Activated B cell treated with CpG ODN at 0.5 μM for 24 hours (primary cell): ENCODE measurements at regions of chr20 and their contacts with region 1.

Region 1: DNA sequence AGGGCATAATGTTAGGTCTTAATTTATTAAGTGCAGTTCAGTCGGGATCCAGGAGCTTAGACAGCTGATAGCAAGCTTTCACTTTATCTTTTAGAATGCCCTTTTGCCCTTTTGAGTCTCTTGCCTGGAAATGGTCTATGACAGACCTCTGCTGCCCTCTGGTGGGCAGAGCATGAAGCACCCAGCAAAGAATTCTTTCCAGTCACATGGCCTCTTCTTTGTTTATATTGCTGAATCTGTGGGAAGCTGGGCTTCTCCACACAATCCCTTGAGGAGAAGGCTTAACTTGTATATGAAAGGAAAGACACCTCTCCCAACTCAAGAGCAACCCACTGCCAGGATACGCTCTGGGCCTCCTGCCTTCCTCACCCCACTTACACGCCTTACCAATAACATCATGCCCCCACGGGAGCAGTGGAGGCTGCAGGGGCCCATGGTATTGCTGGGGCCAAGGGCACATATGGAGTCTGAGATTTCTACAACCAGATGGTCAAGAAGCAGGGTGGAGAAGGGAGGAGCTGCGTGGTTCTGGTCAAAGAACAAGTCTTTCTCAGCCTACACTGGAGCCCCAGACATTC is 20.4 kb downstream of the WFDC3 start:
- DNase-seq: peak; percentile 65
- ATAC-seq: peak; percentile 71
- H3K4me3 Mint-ChIP-seq: no peak overlapping the region
- H3K27ac Mint-ChIP-seq: no peak overlapping the region
- H3K4me1 Mint-ChIP-seq: peaks cover 5% of the 10 kb centered on the region
- H3K27me3 Mint-ChIP-seq: peaks cover 16% of the 10 kb centered on the region
- CTCF ChIP-seq: peak; percentile 20

Region 2: DNA sequence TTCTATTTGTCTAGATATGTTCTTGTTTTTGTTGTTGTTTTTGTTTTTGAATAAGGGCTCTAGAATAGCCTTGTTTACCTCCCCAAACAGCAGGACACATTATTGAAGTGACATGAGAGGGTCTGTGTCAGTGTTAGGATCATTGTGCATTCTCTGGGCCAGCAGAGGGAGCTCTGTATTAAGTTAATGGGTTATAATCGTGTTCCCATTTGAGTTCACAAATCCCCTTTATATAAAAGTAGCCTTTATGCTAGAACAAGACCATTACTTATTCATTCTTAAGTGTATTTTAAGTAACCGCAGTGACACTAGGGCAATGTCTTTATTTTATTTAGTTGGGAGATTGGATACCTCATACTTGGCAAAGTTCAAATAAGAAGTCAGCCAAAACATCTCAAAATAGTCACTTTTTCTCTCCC is 760.2 kb before region 1 on chr20:
- CTCF ChIA-PET with region 1: no interaction called
- POLR2A ChIA-PET with region 1: no interaction called
- intact Hi-C with region 1: loop called (anchors 1 kb)
- DNase-seq: no peak
- ATAC-seq: peak; percentile 57
- H3K4me3 Mint-ChIP-seq: no peak overlapping the region
- H3K27ac Mint-ChIP-seq: peak overlapping the region; percentile 33
- H3K4me1 Mint-ChIP-seq: peaks cover 19% of the 10 kb centered on the region
- H3K27me3 Mint-ChIP-seq: no peaks in the 10 kb centered on the region
- CTCF ChIP-seq: no peak

Region 3: GRCh38 chr20:45080867-45081624 is 690.2 kb before region 1 on chr20:
- CTCF ChIA-PET with region 1: no interaction called
- POLR2A ChIA-PET with region 1: no interaction called
- intact Hi-C with region 1: no loop called
- DNase-seq: no peak
- ATAC-seq: no peak
- H3K4me3 Mint-ChIP-seq: no peak overlapping the region
- H3K27ac Mint-ChIP-seq: peak overlapping the region; percentile 16
- H3K4me1 Mint-ChIP-seq: peaks cover 5% of the 10 kb centered on the region
- H3K27me3 Mint-ChIP-seq: no peaks in the 10 kb centered on the region
- CTCF ChIP-seq: no peak

Region 4: GRCh38 chr20:45293041-45294002 is 477.9 kb before region 1 on chr20:
- CTCF ChIA-PET with region 1: interaction called, 33 read pairs
- POLR2A ChIA-PET with region 1: no interaction called
- intact Hi-C with region 1: no loop called
- DNase-seq: peak; percentile 78
- ATAC-seq: peak; percentile 89
- H3K4me3 Mint-ChIP-seq: peak overlapping the region; percentile 80
- H3K27ac Mint-ChIP-seq: no peak overlapping the region
- H3K4me1 Mint-ChIP-seq: peaks cover 21% of the 10 kb centered on the region
- H3K27me3 Mint-ChIP-seq: peaks cover 27% of the 10 kb centered on the region
- CTCF ChIP-seq: peak; percentile 87

Region 5: GRCh38 chr20:45311589-45312211 is 459.6 kb before region 1 on chr20:
- CTCF ChIA-PET with region 1: interaction called, 10 read pairs
- POLR2A ChIA-PET with region 1: no interaction called
- intact Hi-C with region 1: loop called (anchors 1 kb)
- DNase-seq: peak; percentile 58
- ATAC-seq: peak; percentile 89
- H3K4me3 Mint-ChIP-seq: no peak overlapping the region
- H3K27ac Mint-ChIP-seq: no peak overlapping the region
- H3K4me1 Mint-ChIP-seq: peaks cover 7% of the 10 kb centered on the region
- H3K27me3 Mint-ChIP-seq: peaks cover 55% of the 10 kb centered on the region
- CTCF ChIP-seq: peak; percentile 76

Region 6: DNA sequence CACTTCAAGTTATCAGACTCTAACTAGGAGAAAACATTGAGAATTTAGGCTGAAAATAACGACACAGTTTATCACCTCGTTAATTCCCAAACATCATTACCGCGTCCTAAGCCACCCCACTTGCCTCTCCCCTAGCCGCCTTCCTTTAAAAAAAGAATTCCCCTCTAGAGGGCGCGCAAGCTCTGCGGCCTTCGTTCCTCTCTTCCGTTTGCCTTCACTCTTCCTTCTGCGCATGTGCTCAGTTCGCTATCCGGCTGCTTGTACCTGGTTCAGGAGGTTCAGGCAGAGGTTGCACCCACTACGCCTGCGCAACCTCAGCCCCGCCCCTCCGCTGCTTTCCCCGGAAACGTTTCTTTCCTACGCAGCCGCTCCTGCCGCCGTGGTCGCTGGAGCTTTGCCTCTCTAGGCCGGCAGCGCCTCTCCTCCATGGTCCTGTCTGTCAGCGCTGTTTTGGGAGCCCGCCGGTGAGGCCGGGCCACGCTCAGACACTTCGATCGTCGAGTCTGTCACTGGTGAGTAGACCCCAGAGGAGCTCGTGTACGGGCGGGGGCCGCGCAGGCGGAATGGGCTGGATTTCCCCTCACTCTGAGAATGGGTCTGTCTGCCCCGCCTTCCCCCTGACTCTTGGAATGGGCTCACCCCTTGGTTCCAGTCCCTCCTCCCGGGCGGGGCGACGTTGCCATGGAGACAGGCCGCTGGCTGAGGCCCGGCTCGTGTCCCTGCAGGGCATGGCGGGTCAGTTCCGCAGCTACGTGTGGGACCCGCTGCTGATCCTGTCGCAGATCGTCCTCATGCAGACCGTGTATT is 408.3 kb before region 1 on chr20 and contains the start of gene SYS1:
- CTCF ChIA-PET with region 1: interaction called, 36 read pairs
- POLR2A ChIA-PET with region 1: interaction called, 3 read pairs
- intact Hi-C with region 1: loop called (anchors 1 kb)
- DNase-seq: peak; percentile 94
- ATAC-seq: peak; percentile 84
- H3K4me3 Mint-ChIP-seq: peak within 1 kb of the TSS; percentile 100
- H3K27ac Mint-ChIP-seq: peak within 1 kb of the TSS; percentile 99
- H3K4me1 Mint-ChIP-seq: peaks cover 53% of the 10 kb centered on the region
- H3K27me3 Mint-ChIP-seq: no peaks in the 10 kb centered on the region
- CTCF ChIP-seq: peak; percentile 69
- total RNA-seq, gene SYS1: 31.7 and 35.2 TPM in 2 replicates

Region 7: DNA sequence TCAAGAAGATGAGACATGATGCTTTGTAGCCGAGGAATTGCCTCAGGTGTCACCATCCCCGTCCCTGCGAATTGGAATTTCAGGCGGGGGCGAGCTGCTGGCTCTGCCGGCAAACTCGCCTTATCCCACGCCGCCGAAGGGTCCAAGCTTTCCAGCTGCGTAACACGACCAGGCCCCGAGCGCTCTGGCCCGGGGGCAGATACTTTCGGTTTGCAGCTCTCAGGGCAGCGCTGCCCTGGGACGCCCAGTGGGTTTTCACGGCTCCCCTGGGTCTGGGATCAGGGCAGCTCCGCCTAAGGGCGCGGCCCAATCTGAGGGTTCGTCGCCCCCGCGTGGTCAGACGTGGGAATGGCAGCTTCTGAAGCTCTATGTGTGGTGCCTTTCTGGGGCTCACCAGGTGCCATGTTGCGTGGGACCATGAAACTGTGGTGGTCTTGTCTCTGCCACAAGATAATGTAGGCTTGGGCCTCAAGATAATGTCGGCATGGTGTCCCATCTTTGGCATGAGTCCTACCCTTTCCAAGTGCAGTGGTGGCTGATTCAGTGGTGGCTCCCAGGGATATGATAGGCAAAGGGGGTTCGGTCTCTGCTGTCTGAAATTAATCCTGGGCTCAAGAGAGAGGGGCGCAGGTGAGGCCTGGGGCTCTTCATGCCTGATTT is 334.4 kb before region 1 on chr20:
- CTCF ChIA-PET with region 1: interaction called, 13 read pairs
- POLR2A ChIA-PET with region 1: interaction called, 3 read pairs
- intact Hi-C with region 1: loop called (anchors 1 kb)
- DNase-seq: peak; percentile 84
- ATAC-seq: peak; percentile 91
- H3K4me3 Mint-ChIP-seq: peak overlapping the region; percentile 86
- H3K27ac Mint-ChIP-seq: peak overlapping the region; percentile 68
- H3K4me1 Mint-ChIP-seq: peaks cover 39% of the 10 kb centered on the region
- H3K27me3 Mint-ChIP-seq: no peaks in the 10 kb centered on the region
- CTCF ChIP-seq: peak; percentile 60

Region 8: DNA sequence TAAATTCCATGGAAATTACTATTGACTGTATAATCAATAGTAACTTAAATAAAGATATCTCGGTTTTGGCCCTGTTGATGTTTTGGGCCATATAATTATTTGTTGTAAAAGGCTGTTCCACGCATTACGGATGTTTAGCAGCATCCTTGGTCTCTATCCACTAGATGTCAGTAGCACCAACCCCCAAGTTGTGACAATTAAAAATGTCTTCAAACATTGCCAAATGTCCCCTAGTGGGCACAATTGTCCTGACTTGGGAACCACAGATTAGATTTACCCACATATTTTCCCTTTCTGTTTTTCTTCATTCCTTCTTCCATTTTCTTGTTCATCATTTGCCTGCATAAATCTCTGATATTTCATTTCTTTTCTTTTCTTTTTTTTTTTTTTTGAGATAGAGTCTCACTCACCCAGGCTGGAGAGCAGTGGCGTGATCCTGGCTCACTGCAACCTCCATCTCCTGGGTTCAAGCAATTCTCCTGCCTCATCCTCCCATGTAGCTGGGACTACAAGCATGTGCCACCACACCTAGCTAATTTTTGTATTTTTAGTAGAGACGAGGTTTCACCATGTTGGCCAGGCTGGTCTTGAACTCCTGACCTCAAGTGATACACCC is 178.6 kb before region 1 on chr20:
- CTCF ChIA-PET with region 1: interaction called, 10 read pairs
- POLR2A ChIA-PET with region 1: no interaction called
- intact Hi-C with region 1: loop called (anchors 1 kb)
- DNase-seq: no peak
- ATAC-seq: peak; percentile 54
- H3K4me3 Mint-ChIP-seq: no peak overlapping the region
- H3K27ac Mint-ChIP-seq: no peak overlapping the region
- H3K4me1 Mint-ChIP-seq: no peaks in the 10 kb centered on the region
- H3K27me3 Mint-ChIP-seq: peaks cover 21% of the 10 kb centered on the region
- CTCF ChIP-seq: no peak

Region 9: GRCh38 chr20:45924391-45925261 is 153.4 kb after region 1 on chr20:
- CTCF ChIA-PET with region 1: no interaction called
- POLR2A ChIA-PET with region 1: no interaction called
- intact Hi-C with region 1: no loop called
- DNase-seq: no peak
- ATAC-seq: no peak
- H3K4me3 Mint-ChIP-seq: no peak overlapping the region
- H3K27ac Mint-ChIP-seq: no peak overlapping the region
- H3K4me1 Mint-ChIP-seq: no peaks in the 10 kb centered on the region
- H3K27me3 Mint-ChIP-seq: peaks cover 15% of the 10 kb centered on the region
- CTCF ChIP-seq: no peak